Heart left ventricle (tissue), 16 donors: ENCODE measurements at regions of chr5 and their contacts with region 1.

Region 1: GRCh38 chr5:156326718-156327259 is at the start of gene SGCD:
- DNase-seq: peak; percentile 70 to 88 (median 82)
- ATAC-seq: peak; percentile 83 to 93 (median 90)
- H3K4me3 ChIP-seq: peak within 1 kb of the TSS; percentile 3 to 71 (median 56)
- H3K27ac ChIP-seq: peak within 1 kb of the TSS; percentile 55 to 90 (median 78)
- H3K4me1 ChIP-seq: peaks cover 0 to 40% (median 9%) of the 10 kb centered on the region in 12 donors
- H3K27me3 ChIP-seq: no peaks in the 10 kb centered on the region
- CTCF ChIP-seq: peak in 1 of 12 donors; percentile 21
- POLR2A ChIP-seq: peak in 1 of 2 donors; percentile 59
- total RNA-seq, gene SGCD: 59.3 to 150 (median 90.3) TPM

Region 2: GRCh38 chr5:155943516-155944407 is 383.0 kb before region 1 on chr5:
- intact Hi-C with region 1: loop called in 1 of 10 experiments (anchors 10 kb)
- DNase-seq: peak in 4 of 5 donors; percentile 28 to 50 (median 40)
- ATAC-seq: peak; percentile 64 to 93 (median 76)
- H3K4me3 ChIP-seq: no peak overlapping the region
- H3K27ac ChIP-seq: no peak overlapping the region
- H3K4me1 ChIP-seq: peaks cover 0 to 10% (median 0%) of the 10 kb centered on the region in 12 donors
- H3K27me3 ChIP-seq: no peaks in the 10 kb centered on the region
- CTCF ChIP-seq: peak; percentile 51 to 81 (median 72)
- POLR2A ChIP-seq: no peak

Region 3: DNA sequence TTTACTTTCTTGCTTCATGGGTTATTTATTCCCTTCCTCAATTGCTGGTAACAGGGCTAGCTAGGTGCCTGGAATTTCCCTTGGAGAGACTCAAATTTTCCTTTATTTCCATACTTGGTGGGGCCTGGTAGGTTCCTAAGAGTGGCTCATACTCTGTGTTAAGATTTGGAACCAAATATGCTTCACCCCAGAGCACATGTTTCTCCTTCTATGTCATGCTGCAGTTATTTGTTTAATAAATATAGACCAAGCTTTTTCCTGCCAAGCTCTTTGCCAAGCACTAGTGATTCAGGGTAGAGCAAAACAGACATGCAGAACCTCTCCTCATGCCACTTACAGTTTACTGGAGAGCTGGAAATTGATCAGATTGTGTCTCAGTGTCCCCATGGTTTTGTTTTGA is 290.1 kb before region 1 on chr5:
- intact Hi-C with region 1: loop called in 1 of 10 experiments (anchors 10 kb)
- DNase-seq: peak in 3 of 5 donors; percentile 13 to 35 (median 23)
- ATAC-seq: peak; percentile 86 to 96 (median 89)
- H3K4me3 ChIP-seq: no peak overlapping the region
- H3K27ac ChIP-seq: peak overlapping the region; percentile 29 to 84 (median 72)
- H3K4me1 ChIP-seq: peaks cover 0 to 29% (median 5%) of the 10 kb centered on the region in 12 donors
- H3K27me3 ChIP-seq: no peaks in the 10 kb centered on the region
- CTCF ChIP-seq: no peak
- POLR2A ChIP-seq: no peak

Region 4: GRCh38 chr5:156137071-156137869 is 189.5 kb before region 1 on chr5:
- intact Hi-C with region 1: no loop called
- DNase-seq: no peak
- ATAC-seq: no peak
- H3K4me3 ChIP-seq: no peak overlapping the region
- H3K27ac ChIP-seq: no peak overlapping the region
- H3K4me1 ChIP-seq: no peaks in the 10 kb centered on the region
- H3K27me3 ChIP-seq: no peaks in the 10 kb centered on the region
- CTCF ChIP-seq: no peak
- POLR2A ChIP-seq: no peak

Region 5: DNA sequence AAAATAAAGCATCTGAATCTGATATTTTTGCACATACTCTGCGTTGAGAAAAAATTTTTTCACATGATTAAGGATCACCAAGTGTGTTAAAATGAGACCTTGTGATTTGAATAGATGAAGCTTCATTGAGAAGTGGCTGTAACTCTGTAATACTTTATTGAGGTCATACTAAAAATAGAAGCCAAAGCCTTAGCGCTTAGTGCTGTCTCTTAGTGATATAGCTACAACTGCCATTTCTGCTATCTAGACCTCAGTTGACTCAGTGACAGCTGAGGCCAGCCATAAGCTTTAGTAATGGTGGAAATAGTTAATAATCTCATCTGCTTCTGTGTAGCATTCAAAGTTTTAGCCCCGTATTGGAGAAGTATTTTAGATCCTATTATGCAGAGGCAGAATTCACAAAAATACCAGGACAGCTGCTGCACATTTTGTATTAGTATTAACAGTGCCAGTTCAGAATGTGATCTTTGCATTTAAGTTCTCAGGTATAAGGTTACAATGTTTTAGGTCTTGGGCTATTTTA is 107.2 kb before region 1 on chr5:
- intact Hi-C with region 1: no loop called
- DNase-seq: no peak
- ATAC-seq: peak; percentile 90 to 95 (median 92)
- H3K4me3 ChIP-seq: no peak overlapping the region
- H3K27ac ChIP-seq: peak overlapping the region in 2 of 12 donors; percentile 17 to 34
- H3K4me1 ChIP-seq: peaks cover 0 to 10% (median 0%) of the 10 kb centered on the region in 12 donors
- H3K27me3 ChIP-seq: no peaks in the 10 kb centered on the region
- CTCF ChIP-seq: no peak
- POLR2A ChIP-seq: no peak

Region 6: GRCh38 chr5:156271569-156271968 is 55.2 kb before region 1 on chr5:
- intact Hi-C with region 1: loop called in 1 of 10 experiments (anchors 5 kb)
- DNase-seq: peak in 4 of 5 donors; percentile 22 to 43 (median 30)
- ATAC-seq: peak; percentile 90 to 97 (median 95)
- H3K4me3 ChIP-seq: no peak overlapping the region
- H3K27ac ChIP-seq: peak overlapping the region in 11 of 12 donors; percentile 22 to 71 (median 58)
- H3K4me1 ChIP-seq: peaks cover 0 to 27% (median 6%) of the 10 kb centered on the region in 12 donors
- H3K27me3 ChIP-seq: no peaks in the 10 kb centered on the region
- CTCF ChIP-seq: no peak
- POLR2A ChIP-seq: no peak

Region 7: DNA sequence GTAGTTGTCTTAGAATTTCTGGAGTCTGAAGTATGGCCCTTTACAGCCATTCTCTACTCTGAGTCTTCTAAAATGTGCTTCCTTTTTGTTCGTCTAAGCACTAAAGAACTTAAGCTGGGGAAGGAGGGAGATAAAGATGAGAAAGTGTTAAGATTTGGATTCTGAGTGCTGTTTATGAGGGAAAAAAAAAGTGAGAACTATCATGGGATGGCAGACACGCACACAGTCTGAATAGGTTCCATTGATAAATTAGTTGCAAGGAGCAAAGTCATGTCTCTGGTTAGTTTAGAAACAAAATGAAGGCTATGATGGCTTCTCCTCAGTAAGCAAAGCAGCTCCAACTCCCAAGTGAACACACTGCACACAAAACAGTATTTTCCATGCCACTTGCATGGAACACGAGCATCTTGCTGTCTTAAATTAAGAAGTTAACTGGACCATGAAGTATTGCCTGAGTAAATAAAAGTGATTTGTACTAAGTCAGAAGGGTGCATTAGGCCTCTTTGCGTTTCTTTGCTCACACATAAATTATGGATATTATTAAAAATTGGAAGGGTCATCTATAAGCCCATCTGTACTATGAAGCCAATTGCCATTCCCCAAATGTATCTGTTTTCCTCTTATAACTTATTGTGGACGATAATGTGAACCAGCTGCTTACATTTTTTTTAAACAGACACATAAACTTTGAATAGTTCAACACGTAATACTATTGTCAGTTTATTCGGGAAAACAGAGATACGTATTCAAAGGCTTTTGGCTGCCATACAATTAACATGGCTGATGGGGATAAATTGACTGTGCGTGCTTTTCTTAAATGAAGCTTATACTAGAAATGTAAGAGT is 199.5 kb after region 1 on chr5:
- intact Hi-C with region 1: no loop called
- DNase-seq: no peak
- ATAC-seq: no peak
- H3K4me3 ChIP-seq: no peak overlapping the region
- H3K27ac ChIP-seq: no peak overlapping the region
- H3K4me1 ChIP-seq: no peaks in the 10 kb centered on the region
- H3K27me3 ChIP-seq: no peaks in the 10 kb centered on the region
- CTCF ChIP-seq: no peak
- POLR2A ChIP-seq: no peak

Region 8: DNA sequence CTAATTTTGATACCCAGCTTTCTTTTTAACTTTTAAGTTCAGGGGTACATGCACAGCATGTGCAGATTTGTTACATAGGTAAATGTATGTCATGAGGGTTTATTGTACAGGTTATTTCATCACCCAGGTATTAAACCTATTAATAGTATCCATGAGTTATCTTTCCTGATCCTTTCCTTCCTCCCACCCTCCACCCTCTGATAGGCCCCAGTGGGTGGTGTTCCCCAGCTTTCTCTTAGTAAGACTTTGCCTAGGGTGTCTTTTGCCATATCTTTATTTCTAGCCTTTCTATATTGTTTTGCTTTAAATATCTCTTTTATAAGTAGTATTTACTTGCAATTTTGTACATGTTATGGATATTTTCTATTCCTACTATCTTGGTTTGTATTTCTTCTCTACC is 243.8 kb after region 1 on chr5:
- intact Hi-C with region 1: no loop called
- DNase-seq: no peak
- ATAC-seq: no peak
- H3K4me3 ChIP-seq: no peak overlapping the region
- H3K27ac ChIP-seq: no peak overlapping the region
- H3K4me1 ChIP-seq: peaks cover 0 to 14% (median 0%) of the 10 kb centered on the region in 12 donors
- H3K27me3 ChIP-seq: no peaks in the 10 kb centered on the region
- CTCF ChIP-seq: no peak
- POLR2A ChIP-seq: no peak

Region 9: DNA sequence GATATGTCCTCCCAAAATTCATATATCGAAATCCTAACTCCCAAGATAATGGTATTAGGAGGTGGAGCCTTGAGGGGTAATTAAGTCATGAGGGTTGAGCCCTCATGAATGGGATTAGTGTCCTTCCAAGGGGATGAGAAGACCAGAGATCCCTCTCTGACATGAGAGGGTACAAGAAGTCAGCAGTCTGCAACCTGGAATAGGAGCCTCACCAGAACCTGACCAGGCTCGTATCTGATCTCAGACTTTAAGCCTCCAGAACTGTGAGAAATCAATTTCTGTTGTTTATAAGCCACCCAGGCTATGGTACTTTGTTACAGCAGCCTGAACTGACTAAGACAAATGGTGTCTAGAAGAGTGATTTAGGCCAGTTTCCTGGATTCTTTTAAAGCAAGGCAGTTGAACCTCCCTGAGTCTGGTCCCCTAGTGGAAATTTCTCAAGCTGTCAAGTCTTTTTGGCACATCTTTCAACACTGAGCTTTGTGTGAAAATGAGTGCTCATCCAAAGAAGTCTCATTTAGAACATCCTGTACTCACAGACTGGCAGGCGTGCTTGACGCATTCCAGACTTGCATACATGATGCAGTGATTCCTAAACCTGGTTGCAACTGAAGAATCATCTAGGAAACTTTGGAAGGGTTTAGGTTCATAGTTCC is 268.5 kb after region 1 on chr5:
- intact Hi-C with region 1: loop called in 2 of 10 experiments (anchors 2 to 5 kb)
- DNase-seq: peak; percentile 40 to 89 (median 62)
- ATAC-seq: peak; percentile 93 to 97 (median 94)
- H3K4me3 ChIP-seq: no peak overlapping the region
- H3K27ac ChIP-seq: peak overlapping the region; percentile 52 to 88 (median 78)
- H3K4me1 ChIP-seq: peaks cover 0 to 31% (median 9%) of the 10 kb centered on the region in 12 donors
- H3K27me3 ChIP-seq: no peaks in the 10 kb centered on the region
- CTCF ChIP-seq: peak in 6 of 12 donors; percentile 6 to 29 (median 16)
- POLR2A ChIP-seq: no peak